Activated T-helper 2 cell treated with anti-CD3 and anti-CD28 coated beads, Interferon-gamma antibody, Interleukin-2, Interleukin-4, amounts not matched to agents 10 μg/mL and 5 μg/mL and 100 μg/mL, durations not matched to agents 14 hours and 24 hours and 36 hours (primary cell): ENCODE measurements at regions of chr7 and their contacts with region 1.

Region 1: DNA sequence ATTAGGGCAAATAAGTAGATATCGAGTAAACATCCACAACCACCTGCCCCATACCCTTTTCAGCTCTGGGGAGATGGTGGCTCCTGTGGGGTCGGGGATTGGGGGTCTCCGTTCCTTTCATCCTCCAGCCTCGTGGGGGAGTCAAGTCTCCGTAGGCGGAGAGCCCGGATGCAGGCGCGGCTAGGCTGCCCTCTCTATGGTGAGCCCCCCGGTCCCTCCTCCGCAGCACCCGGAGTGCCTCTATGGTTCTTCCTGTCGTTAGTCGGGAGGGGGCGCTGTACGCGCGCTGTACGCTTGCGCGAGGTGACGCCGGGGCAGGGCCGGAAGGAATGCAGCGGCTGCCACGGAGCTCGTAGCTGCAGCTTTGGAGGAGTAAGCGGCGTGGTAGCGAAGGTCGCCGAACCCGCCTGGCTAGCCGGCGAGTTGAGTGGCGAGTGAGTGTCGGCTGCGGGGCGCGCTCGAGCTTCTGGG is 14.8 kb upstream of the MMD2 start:
- DNase-seq: peak; percentile 92
- H3K4me3 Mint-ChIP-seq: peak overlapping the region; percentile 99
- H3K27ac Mint-ChIP-seq: peak overlapping the region; percentile 94
- H3K4me1 Mint-ChIP-seq: peaks cover 9% of the 10 kb centered on the region
- H3K27me3 Mint-ChIP-seq: no peaks in the 10 kb centered on the region

Region 2: DNA sequence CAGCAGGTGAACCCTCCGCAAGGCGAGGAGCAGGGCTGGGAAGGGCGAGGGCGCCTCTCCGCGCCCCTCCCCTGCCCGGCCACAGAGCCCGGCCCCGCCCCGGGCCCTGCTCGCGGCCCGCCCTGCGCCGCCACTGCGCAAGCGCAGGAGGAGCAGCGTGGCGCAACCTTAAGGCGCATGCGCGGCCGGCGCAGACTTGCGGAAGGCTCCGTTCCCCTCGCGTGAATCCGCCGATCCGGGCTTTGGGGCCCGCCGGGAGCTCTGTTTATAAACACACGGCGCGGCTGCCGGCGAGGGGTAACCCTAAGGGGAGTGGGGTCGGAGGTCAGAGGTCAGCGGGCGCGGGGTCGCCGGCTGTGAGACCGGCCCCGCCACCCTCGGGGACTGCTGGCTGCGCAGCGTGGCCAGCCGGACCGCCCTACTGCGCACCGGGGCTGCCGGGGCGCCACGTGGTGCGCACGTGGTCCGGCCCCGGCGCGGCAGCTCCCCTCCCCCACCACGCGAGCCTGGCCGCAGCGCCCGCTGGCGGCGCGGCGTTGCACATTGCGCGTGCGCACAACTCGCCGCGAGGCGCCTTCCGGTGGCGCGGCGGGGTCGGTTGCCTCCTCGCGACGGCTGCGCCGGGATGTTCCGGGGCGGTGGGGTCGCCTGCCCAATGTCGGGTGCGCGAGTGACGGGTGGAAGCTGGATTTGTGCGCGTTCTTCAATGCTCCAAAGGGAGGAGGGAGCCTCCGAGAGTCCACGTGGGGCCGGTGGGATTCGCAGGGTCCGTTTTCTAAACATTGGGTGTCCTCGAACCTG is 331.9 kb before region 1 on chr7:
- intact Hi-C with region 1: loop called (anchors 5 kb)
- DNase-seq: peak; percentile 95
- H3K4me3 Mint-ChIP-seq: peak overlapping the region; percentile 92
- H3K27ac Mint-ChIP-seq: peak overlapping the region; percentile 94
- H3K4me1 Mint-ChIP-seq: peaks cover 12% of the 10 kb centered on the region
- H3K27me3 Mint-ChIP-seq: no peaks in the 10 kb centered on the region

Region 3: DNA sequence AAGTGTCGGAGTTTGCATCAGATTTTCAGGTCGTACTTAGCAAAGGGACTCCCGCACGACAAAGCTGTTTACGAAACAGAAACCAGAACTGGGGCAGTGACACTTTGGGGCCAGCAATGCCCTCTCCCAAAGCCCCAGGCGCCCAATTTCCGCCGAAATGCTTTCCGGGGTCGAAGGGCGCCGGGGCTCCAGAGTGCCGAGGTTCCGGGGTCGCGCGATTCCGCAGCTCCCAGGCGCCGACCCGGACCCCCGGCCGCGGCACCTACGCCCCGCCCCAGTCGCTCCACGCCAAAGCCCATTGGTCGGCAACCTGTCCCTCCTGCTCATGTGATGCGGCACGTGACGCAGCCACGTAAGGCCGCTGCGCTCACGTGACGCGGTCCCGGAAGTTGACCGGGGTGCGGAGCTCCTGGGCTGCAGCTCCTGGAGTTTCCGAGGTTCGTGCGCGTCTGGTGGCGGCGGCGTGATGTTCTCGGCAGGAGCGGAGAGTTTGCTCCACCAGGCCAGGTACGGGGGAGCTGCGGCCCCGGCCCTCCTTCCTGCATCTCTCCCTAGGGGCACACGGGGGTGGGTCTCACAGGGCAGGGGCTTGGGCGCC is 198.4 kb before region 1 on chr7 and contains the start of gene AP5Z1:
- intact Hi-C with region 1: loop called (anchors 1 kb)
- DNase-seq: peak; percentile 90
- H3K4me3 Mint-ChIP-seq: peak within 1 kb of the TSS; percentile 95
- H3K27ac Mint-ChIP-seq: peak within 1 kb of the TSS; percentile 96
- H3K4me1 Mint-ChIP-seq: peaks cover 31% of the 10 kb centered on the region
- H3K27me3 Mint-ChIP-seq: no peaks in the 10 kb centered on the region
- total RNA-seq, gene AP5Z1: 41.5 and 45.9 TPM in 2 replicates

Region 4: DNA sequence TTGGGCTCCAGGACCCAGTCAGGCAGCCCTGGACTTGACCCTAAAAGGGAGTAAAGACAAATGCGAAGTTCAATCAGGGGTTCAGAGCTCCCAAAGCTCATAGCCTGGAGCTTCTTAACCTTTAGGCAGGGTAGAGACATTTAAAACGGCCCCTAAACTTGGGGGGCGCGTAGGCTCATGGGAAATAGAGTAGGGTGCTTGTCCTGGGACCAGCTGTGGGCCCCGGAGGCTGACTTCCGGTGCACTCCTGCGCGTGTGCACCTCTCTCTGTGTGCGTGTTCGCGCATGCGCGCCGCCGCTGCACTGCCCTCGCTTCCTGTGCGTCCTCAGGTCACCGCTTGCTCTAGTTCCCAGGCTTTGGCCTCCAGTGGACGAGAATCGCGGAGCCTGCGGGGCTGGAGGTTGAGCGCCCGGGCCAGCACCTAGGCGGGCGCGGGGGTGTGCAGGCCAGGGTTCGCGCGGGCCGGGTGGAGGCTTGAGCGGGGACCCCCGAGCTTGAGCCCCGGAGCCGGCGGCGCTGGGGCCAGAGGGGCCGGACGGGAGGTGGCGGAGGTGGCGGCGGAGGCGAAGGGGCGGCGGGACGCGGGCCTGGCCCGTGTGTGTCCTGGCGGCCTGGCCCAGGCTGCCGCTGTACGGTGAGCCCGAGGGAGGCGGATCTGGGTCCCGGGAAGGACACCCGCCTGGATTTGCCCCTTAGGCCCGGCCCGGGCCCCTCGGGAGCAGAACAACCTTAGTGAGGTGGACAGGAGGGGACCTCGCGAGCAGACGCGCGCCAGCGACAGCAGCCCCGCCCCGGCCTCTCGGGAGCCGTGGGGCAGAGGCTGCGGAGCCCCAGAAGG is 72.0 kb after region 1 on chr7 and contains the start of gene RBAK:
- intact Hi-C with region 1: loop called (anchors 5 kb)
- DNase-seq: peak; percentile 88
- H3K4me3 Mint-ChIP-seq: peak within 1 kb of the TSS; percentile 95
- H3K27ac Mint-ChIP-seq: peak within 1 kb of the TSS; percentile 86
- H3K4me1 Mint-ChIP-seq: peaks cover 20% of the 10 kb centered on the region
- H3K27me3 Mint-ChIP-seq: no peaks in the 10 kb centered on the region
- total RNA-seq, gene RBAK: 14.1 and 15.4 TPM in 2 replicates

Region 5: DNA sequence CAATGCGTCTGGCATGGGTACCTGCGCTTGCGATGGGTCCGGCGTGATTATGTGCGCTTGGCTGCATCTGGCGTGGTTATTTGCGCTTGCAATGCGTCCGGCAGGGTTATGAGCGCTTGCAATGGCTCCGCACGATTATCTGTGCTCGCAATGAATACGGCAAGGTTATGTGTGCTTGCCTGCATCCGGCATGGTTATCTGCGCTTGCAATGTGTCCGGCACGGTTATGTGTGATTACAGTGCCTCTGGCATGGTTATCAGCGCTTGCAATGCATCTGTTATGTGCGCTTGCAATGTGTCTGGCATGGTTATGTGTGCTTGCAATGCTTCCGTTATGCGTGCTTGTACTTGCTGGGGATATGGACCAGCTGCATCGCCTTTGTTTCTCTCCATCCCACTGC is 109.5 kb after region 1 on chr7:
- intact Hi-C with region 1: loop called (anchors 1 kb)
- DNase-seq: no peak
- H3K4me3 Mint-ChIP-seq: no peak overlapping the region
- H3K27ac Mint-ChIP-seq: no peak overlapping the region
- H3K4me1 Mint-ChIP-seq: no peaks in the 10 kb centered on the region
- H3K27me3 Mint-ChIP-seq: no peaks in the 10 kb centered on the region